Activated CD8-positive, alpha-beta T cell treated with anti-CD3 and anti-CD28 coated beads for 36 hours (primary cell): ENCODE measurements at regions of chr10 and their contacts with region 1.

Region 1: DNA sequence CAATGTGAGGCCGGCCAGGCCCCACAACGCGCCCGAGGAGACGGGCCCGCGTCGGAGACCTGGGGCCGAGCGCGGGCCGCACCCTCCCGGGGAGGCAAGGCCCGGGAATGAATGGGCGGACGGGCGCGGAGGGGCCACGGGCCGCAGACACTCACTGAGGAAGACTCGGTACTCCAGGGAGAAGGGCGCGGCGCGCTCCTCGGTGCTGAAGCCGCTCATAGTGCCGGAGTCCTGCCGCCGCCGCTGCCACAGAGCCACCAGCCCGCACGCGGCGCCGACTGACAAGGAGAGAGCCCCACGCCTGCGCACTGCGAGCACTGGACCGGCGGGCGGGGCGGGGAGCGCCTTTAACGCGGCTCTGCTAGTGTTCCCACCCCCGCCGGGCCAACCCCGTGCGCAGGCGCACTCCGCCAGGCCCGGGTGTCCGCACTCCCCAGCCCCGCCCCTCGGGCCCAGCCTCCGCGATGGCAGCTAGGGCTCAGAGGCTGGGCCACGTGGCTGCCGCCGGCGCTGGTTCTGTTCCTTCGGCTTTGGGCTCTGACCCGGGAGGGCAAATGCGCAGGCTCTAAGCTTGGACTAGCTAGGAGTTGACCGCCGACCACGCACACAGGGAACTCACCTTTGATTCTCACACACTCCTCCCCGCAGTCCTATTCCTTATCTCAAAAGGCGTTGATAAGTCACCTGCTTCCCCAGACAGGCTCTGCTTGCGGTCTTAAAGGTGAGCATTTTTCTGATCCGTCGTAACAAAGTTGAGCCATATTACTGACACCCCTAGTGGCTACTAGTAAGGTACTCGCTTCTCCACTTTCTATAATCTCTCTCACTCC is at the start of gene PPA1:
- DNase-seq: peak; percentile 99
- ATAC-seq: peak; percentile 94
- H3K4me3 Mint-ChIP-seq: peak within 1 kb of the TSS; percentile 80
- H3K27ac Mint-ChIP-seq: peak within 1 kb of the TSS; percentile 94
- H3K4me1 Mint-ChIP-seq: peaks cover 42% of the 10 kb centered on the region
- H3K27me3 Mint-ChIP-seq: no peaks in the 10 kb centered on the region
- CTCF ChIP-seq: no peak
- total RNA-seq, gene PPA1: 357 to 368 TPM

Region 2: DNA sequence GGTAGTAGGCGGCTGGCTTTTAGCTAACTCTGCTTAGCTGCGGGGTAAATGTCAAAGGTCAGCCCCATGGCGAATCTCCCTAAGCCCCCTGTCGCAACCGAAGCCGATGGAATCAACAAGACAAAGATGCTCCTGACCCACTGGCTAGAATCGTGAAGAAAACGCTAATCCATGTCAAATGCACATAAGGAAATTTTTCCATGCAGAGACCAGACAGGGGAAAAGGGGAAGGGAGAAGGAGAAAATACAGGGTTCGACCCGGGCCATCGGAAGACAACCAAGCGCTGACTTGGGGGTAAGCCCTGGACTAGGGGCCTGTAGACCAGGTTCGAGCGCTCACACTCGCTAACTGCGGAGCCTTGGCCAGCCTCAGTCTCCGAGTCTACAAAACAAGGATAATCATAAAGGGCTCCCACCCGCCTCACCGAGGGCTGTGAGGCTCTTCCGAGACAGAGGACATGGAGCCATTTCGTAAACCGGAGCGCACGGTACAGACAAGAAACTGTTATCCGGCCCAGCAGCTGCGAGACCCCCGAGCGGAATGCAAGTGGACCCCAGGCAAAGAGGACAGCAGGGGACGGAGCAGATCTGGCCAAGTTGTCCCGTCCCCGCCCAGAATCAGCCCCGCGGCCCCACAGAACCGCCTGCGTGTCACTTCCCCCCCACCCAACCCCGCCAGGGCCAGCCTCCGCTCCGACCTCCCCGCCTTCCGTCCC is 63.5 kb before region 1 on chr10:
- CTCF ChIA-PET with region 1: no interaction called
- POLR2A ChIA-PET with region 1: interaction called, 23 read pairs
- intact Hi-C with region 1: no loop called
- DNase-seq: peak; percentile 45
- ATAC-seq: peak; percentile 9
- H3K4me3 Mint-ChIP-seq: peak overlapping the region; percentile 92
- H3K27ac Mint-ChIP-seq: peak overlapping the region; percentile 96
- H3K4me1 Mint-ChIP-seq: peaks cover 60% of the 10 kb centered on the region
- H3K27me3 Mint-ChIP-seq: no peaks in the 10 kb centered on the region
- CTCF ChIP-seq: no peak

Region 3: DNA sequence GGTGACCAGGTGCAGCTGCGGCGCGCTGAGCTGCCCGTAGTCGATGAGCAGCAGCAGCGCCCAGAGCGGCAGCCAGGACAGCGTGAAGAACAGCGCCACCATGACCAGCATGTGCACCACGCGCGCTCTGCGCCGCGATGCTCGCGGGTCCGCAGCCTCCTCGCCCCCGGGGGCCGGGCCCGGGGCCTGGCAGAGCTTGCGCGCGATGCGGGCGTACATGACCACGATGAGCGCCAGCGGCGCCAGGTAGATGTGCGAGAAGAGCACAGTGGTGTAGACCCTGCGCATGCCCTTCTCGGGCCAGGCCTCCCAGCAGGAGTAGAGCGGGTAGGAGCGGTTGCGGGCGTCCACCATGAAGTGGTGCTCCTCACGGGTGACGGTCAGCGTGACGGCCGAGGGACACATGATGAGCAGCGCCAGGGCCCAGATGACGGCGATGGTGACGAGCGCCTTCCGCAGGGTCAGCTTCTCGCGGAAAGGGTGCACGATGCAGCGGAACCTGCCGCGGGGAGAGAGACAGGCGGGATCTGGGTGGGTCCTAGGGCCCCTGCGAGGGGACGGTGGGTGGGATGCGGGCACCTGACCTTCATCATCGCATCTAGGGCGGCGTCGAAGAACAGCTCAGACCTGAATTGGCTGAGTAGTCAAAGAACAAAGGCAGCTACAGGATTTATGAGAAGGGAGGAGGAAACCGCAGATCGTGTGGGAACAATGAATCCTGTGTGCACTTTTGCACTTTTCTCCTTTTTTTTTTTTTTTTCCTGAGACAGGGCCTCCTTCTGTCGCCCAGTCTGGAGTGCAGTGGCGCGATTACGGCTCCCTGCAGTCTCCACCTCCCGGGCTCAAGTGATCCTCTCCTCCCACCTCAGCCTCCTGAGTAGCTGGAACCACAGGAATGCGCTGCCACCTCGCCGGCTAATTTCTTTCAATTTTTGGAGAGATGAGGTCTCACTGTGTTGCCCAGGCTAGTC is 22.3 kb after region 1 on chr10:
- CTCF ChIA-PET with region 1: interaction called, 4 read pairs
- POLR2A ChIA-PET with region 1: interaction called, 16 read pairs
- intact Hi-C with region 1: no loop called
- DNase-seq: peak; percentile 18
- ATAC-seq: peak; percentile 68
- H3K4me3 Mint-ChIP-seq: peak overlapping the region; percentile 55
- H3K27ac Mint-ChIP-seq: no peak overlapping the region
- H3K4me1 Mint-ChIP-seq: peaks cover 10% of the 10 kb centered on the region
- H3K27me3 Mint-ChIP-seq: peaks cover 35% of the 10 kb centered on the region
- CTCF ChIP-seq: no peak